Mammary epithelial cell (primary cell): ENCODE measurements at regions of chr12 and their contacts with region 1.

Region 1: GRCh38 chr12:26274441-26275312 is 79.3 kb downstream of the SSPN start:
- DNase-seq: peak; percentile 100
- H3K4me3 ChIP-seq: no peak overlapping the region
- H3K27ac ChIP-seq: peak overlapping the region; percentile 87
- H3K4me1 ChIP-seq: peaks cover 63% of the 10 kb centered on the region
- H3K27me3 ChIP-seq: no peaks in the 10 kb centered on the region
- CTCF ChIP-seq: peak in 1 of 2 donors; percentile 29

Region 2: GRCh38 chr12:26239122-26239851 is 35.4 kb before region 1 on chr12:
- CTCF ChIA-PET with region 1: no interaction called
- dilution Hi-C with region 1: no loop called
- in situ Hi-C with region 1: no loop called
- intact Hi-C with region 1: no loop called
- DNase-seq: peak; percentile 100
- H3K4me3 ChIP-seq: no peak overlapping the region
- H3K27ac ChIP-seq: peak overlapping the region; percentile 87
- H3K4me1 ChIP-seq: peaks cover 32% of the 10 kb centered on the region
- H3K27me3 ChIP-seq: no peaks in the 10 kb centered on the region
- CTCF ChIP-seq: no peak

Region 3: GRCh38 chr12:26493656-26494055 is 219.0 kb after region 1 on chr12:
- CTCF ChIA-PET with region 1: no interaction called
- dilution Hi-C with region 1: no loop called
- in situ Hi-C with region 1: no loop called
- intact Hi-C with region 1: loop called (anchors 10 kb)
- DNase-seq: peak; percentile 68
- H3K4me3 ChIP-seq: no peak overlapping the region
- H3K27ac ChIP-seq: peak overlapping the region; percentile 41
- H3K4me1 ChIP-seq: peaks cover 24% of the 10 kb centered on the region
- H3K27me3 ChIP-seq: no peaks in the 10 kb centered on the region
- CTCF ChIP-seq: no peak